Ascending aorta (tissue), 2 donors: ENCODE measurements at regions of chr1 and their contacts with region 1.

Region 1: GRCh38 chr1:111755331-111756123 is at the start of gene DDX20:
- DNase-seq: peak; percentile 65 to 95
- H3K4me3 ChIP-seq: peak within 1 kb of the TSS; percentile 80 to 96
- H3K27ac ChIP-seq: peak within 1 kb of the TSS; percentile 90 to 95
- H3K4me1 ChIP-seq: peaks cover 0 to 16% of the 10 kb centered on the region in 2 donors
- H3K27me3 ChIP-seq: no peaks in the 10 kb centered on the region
- CTCF ChIP-seq: peak; percentile 92 to 98 (median 92)
- total RNA-seq, gene DDX20: 11.3 TPM

Region 2: GRCh38 chr1:110513511-110513910 is 1242.0 kb before region 1 on chr1:
- intact Hi-C with region 1: no loop called
- DNase-seq: no peak
- H3K4me3 ChIP-seq: no peak overlapping the region
- H3K27ac ChIP-seq: no peak overlapping the region
- H3K4me1 ChIP-seq: no peaks in the 10 kb centered on the region
- H3K27me3 ChIP-seq: no peaks in the 10 kb centered on the region
- CTCF ChIP-seq: no peak

Region 3: GRCh38 chr1:111448918-111449702 is 306.4 kb before region 1 on chr1 and contains the starts of genes ATP5PB and WDR77:
- intact Hi-C with region 1: loop called (anchors 1 kb)
- DNase-seq: peak; percentile 89 to 98
- H3K4me3 ChIP-seq: peak within 1 kb of the TSS; percentile 85 to 96
- H3K27ac ChIP-seq: peak within 1 kb of the TSS; percentile 80 to 84
- H3K4me1 ChIP-seq: peaks cover 13 to 29% of the 10 kb centered on the region in 2 donors
- H3K27me3 ChIP-seq: no peaks in the 10 kb centered on the region
- CTCF ChIP-seq: peak in 1 of 3 experiments; percentile 7
- total RNA-seq, gene ATP5PB: 24.7 TPM
- total RNA-seq, gene WDR77: 31.2 TPM

Region 4: GRCh38 chr1:111507411-111508201 is 247.9 kb before region 1 on chr1:
- intact Hi-C with region 1: loop called (anchors 1 kb)
- DNase-seq: peak; percentile 59 to 89
- H3K4me3 ChIP-seq: peak overlapping the region; percentile 36 to 45
- H3K27ac ChIP-seq: peak overlapping the region; percentile 93 to 98
- H3K4me1 ChIP-seq: peaks cover 9 to 29% of the 10 kb centered on the region in 2 donors
- H3K27me3 ChIP-seq: no peaks in the 10 kb centered on the region
- CTCF ChIP-seq: peak in 1 of 3 experiments; percentile 9

Region 5: DNA sequence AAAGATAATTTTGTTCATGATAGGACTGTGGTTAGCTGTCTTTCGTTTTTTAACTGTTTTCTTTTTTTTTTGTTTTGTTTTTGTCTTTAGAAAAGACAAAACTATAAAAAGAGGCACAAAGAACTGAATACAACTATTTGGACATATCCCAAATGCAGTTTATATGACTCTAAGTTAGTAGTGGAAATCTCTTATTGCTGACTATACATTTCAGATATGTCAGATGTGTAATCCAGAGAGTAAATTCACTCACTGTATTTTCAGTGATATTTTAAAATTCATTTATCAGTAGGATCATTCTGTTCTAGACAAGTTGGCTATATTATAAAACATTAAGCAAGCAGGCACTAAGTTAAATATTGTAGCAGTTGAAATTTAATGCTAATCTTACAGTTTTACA is 130.3 kb before region 1 on chr1:
- intact Hi-C with region 1: no loop called
- DNase-seq: no peak
- H3K4me3 ChIP-seq: no peak overlapping the region
- H3K27ac ChIP-seq: no peak overlapping the region
- H3K4me1 ChIP-seq: peaks cover 6 to 59% of the 10 kb centered on the region in 2 donors
- H3K27me3 ChIP-seq: no peaks in the 10 kb centered on the region
- CTCF ChIP-seq: no peak

Region 6: DNA sequence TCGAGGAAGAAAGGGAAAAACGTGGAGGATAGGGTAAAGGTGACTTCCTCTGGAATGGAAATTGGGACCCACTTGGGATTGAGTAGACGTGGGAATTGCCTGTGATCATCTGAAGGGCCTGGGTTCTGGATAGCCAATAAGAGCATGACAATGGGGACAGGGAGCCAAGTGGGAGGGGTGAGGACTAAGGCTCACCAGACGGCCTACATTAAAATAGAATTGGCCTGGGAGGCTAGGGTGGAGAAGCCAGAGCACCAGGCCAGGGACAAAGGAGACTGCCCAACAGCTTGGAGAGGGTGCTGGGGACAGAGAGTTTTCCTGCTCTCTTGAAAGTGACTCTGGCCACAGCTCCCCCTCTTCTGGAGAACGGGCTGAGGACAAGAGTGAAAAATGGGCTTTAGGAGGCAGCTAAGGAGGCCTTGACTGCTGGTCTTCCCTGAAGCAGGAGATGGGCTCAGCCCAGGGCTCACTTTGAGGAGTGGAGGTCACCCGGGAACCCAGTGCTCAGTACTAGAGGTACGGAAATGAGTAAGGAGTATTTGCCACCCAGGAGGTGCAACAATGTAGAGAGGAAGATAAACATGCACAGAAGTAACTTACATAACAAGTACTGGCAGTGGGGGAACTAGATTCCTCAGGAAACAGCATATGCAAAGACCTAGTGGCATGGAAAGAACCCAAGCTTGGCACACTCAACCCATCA is 35.1 kb before region 1 on chr1:
- intact Hi-C with region 1: loop called (anchors 1 kb)
- DNase-seq: no peak
- H3K4me3 ChIP-seq: no peak overlapping the region
- H3K27ac ChIP-seq: peak overlapping the region; percentile 33 to 67
- H3K4me1 ChIP-seq: peaks cover 0 to 7% of the 10 kb centered on the region in 2 donors
- H3K27me3 ChIP-seq: no peaks in the 10 kb centered on the region
- CTCF ChIP-seq: no peak

Region 7: GRCh38 chr1:111789142-111789541 is 33.6 kb after region 1 on chr1:
- intact Hi-C with region 1: no loop called
- DNase-seq: no peak
- H3K4me3 ChIP-seq: no peak overlapping the region
- H3K27ac ChIP-seq: no peak overlapping the region
- H3K4me1 ChIP-seq: no peaks in the 10 kb centered on the region
- H3K27me3 ChIP-seq: no peaks in the 10 kb centered on the region
- CTCF ChIP-seq: no peak

Region 8: DNA sequence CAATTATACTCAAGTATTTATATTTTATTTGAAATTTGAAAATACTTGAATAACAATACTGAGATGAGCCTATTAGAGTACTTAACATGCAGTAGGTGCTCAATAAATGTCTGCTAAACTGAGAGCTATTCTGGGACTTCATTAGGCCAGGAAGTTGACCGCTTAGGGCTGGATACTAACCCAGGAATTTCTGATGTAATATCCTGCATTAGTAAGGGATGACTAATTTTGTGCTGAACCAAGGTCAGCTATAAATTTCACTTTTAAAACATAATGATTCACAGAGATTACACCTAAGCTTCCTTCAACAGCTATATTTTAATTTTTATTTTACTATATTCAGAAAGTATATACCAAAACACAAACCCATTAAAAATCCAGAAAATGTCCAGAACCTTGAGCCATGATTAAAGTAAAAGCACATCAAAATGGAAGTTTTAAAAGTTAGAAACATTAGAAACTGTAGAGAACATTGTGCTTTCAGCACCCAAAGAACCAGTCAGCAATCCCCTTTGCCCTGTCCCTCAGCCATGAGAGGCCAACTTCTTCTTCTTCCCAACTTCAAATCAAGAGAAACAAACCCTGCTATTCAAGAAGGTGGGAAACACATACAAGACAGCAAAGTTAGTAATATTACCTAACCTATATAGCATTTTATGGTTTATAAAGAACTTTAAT is 788.6 kb after region 1 on chr1:
- intact Hi-C with region 1: loop called (anchors 10 kb)
- DNase-seq: no peak
- H3K4me3 ChIP-seq: no peak overlapping the region
- H3K27ac ChIP-seq: peak overlapping the region; percentile 79 to 86
- H3K4me1 ChIP-seq: peaks cover 0 to 18% of the 10 kb centered on the region in 2 donors
- H3K27me3 ChIP-seq: no peaks in the 10 kb centered on the region
- CTCF ChIP-seq: no peak